Caco-2 (cell line): ENCODE measurements at regions of chr2 and their contacts with region 1.

Region 1: GRCh38 chr2:145800151-145801091 is 1280.5 kb upstream of the ZEB2 start:
- DNase-seq: peak in 1 of 2 experiments; percentile 66
- H3K4me3 ChIP-seq: no peak overlapping the region
- H3K4me3 Mint-ChIP-seq: peak overlapping the region; percentile 11
- H3K27ac Mint-ChIP-seq: peak overlapping the region; percentile 15
- H3K4me1 ChIP-seq: peaks cover 4% of the 10 kb centered on the region; the same call in 1 of the 2 replicates
- H3K4me1 Mint-ChIP-seq: no peaks in the 10 kb centered on the region
- H3K27me3 ChIP-seq: no peaks in the 10 kb centered on the region
- H3K27me3 Mint-ChIP-seq: no peaks in the 10 kb centered on the region
- CTCF ChIP-seq: no peak

Region 2: GRCh38 chr2:145404690-145405089 is 395.7 kb before region 1 on chr2:
- CTCF ChIA-PET with region 1: no interaction called
- POLR2A ChIA-PET with region 1: no interaction called
- intact Hi-C with region 1: no loop called
- DNase-seq: no peak
- H3K4me3 ChIP-seq: no peak overlapping the region
- H3K4me3 Mint-ChIP-seq: no peak overlapping the region
- H3K27ac Mint-ChIP-seq: no peak overlapping the region
- H3K4me1 ChIP-seq: no peaks in the 10 kb centered on the region
- H3K4me1 Mint-ChIP-seq: no peaks in the 10 kb centered on the region
- H3K27me3 ChIP-seq: no peaks in the 10 kb centered on the region
- H3K27me3 Mint-ChIP-seq: no peaks in the 10 kb centered on the region
- CTCF ChIP-seq: no peak

Region 3: GRCh38 chr2:145822892-145823534 is 22.6 kb after region 1 on chr2:
- CTCF ChIA-PET with region 1: no interaction called
- POLR2A ChIA-PET with region 1: no interaction called
- intact Hi-C with region 1: loop called (anchors 1 kb)
- DNase-seq: no peak
- H3K4me3 ChIP-seq: no peak overlapping the region
- H3K4me3 Mint-ChIP-seq: peak overlapping the region; percentile 2
- H3K27ac Mint-ChIP-seq: peak overlapping the region; percentile 36
- H3K4me1 ChIP-seq: no peaks in the 10 kb centered on the region
- H3K4me1 Mint-ChIP-seq: peaks cover 12% of the 10 kb centered on the region
- H3K27me3 ChIP-seq: no peaks in the 10 kb centered on the region
- H3K27me3 Mint-ChIP-seq: peaks cover 6% of the 10 kb centered on the region
- CTCF ChIP-seq: no peak